Dorsolateral prefrontal cortex (tissue), 120 donors: ENCODE measurements at regions of chr15 and their contacts with region 1.

Region 1: DNA sequence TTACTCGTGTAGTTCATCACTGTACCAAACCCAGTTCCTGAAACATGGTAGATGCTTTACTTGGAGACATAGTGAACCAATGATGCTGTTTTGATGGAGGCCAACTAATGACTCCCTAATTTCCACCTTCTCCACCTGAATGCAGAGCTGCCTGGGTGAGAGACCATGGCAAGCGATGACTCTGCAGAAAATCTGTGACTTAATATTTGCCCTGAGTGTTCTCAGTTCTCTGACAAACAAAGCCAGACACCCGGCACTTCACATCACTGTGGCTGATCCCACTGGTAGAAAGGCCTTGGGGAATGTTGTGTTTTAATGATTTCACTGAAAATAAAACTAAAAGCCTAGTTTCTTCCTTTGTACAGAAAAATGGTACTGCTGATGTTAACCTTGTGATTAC is 39.5 kb upstream of the UBE3A start:
- DNase-seq: no peak
- H3K4me3 ChIP-seq: no peak overlapping the region
- H3K27ac ChIP-seq: no peak overlapping the region
- H3K27me3 ChIP-seq: no peaks in the 10 kb centered on the region
- CTCF ChIP-seq: no peak

Region 2: GRCh38 chr15:25416693-25417092 is 61.6 kb before region 1 on chr15:
- intact Hi-C with region 1: loop called in 1 of 2 experiments (anchors 10 kb)
- DNase-seq: no peak
- H3K4me3 ChIP-seq: no peak overlapping the region
- H3K27ac ChIP-seq: peak overlapping the region in 2 of 59 donors; percentile 20 to 27
- H3K27me3 ChIP-seq: no peaks in the 10 kb centered on the region
- CTCF ChIP-seq: no peak

Region 3: GRCh38 chr15:25892126-25892525 is 413.8 kb after region 1 on chr15:
- intact Hi-C with region 1: no loop called
- DNase-seq: no peak
- H3K4me3 ChIP-seq: no peak overlapping the region
- H3K27ac ChIP-seq: no peak overlapping the region
- H3K27me3 ChIP-seq: no peaks in the 10 kb centered on the region
- CTCF ChIP-seq: no peak